Heart left ventricle (tissue), 16 donors: ENCODE measurements at regions of chr9 and their contacts with region 1.

Region 1: DNA sequence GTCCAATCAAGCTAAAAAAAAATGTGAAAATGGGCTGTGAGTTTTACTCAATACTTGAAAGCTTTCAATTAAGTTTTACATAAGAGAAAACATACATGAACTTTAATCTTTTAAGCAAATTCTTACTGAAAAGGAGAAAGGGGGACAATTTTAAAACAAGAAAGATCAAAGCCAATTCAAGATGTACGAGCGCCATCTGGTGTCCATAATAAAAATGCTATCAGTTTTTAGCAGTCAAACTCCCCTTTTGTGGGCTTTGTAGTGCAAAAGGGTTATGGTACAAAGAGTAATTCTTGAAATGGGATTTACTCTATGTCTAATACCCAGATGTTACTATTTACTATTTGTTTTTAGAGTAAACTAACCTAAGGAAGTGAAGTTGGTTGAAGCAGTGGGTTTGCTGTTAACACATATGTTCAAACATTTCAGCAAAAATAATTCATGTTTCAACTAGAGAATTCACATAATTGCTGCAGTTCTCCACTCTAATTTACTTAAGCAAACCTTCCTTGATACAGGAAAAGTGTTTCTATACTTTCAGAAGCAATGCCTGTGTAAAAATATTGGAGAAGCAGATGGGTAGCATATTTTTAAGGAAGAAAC is 228.2 kb upstream of the TYRP1 start:
- DNase-seq: no peak
- ATAC-seq: no peak
- H3K4me3 ChIP-seq: no peak overlapping the region
- H3K27ac ChIP-seq: no peak overlapping the region
- H3K4me1 ChIP-seq: no peaks in the 10 kb centered on the region
- H3K27me3 ChIP-seq: no peaks in the 10 kb centered on the region
- CTCF ChIP-seq: peak; percentile 27 to 63 (median 48)
- POLR2A ChIP-seq: no peak

Region 2: DNA sequence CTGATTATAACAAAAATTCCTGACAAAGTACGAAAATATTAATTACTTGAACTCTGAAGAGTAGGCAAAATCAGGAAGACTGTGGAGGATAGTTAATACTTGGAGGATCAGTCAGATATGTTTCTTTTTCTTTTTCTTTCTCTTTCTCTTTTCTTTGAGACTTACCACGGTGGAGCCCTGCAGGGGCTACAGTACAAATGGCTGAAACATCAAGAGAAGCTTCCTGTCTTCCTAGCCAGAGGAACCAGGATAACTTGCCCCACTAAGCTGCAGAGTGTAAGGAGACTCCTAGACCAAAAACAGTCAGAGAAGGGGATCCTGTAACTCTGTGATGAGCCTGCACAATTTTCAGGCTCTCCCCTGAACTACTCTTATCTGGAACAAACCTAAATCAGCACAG is 96.4 kb before region 1 on chr9:
- intact Hi-C with region 1: no loop called
- DNase-seq: no peak
- ATAC-seq: no peak
- H3K4me3 ChIP-seq: no peak overlapping the region
- H3K27ac ChIP-seq: no peak overlapping the region
- H3K4me1 ChIP-seq: no peaks in the 10 kb centered on the region
- H3K27me3 ChIP-seq: no peaks in the 10 kb centered on the region
- CTCF ChIP-seq: no peak
- POLR2A ChIP-seq: no peak

Region 3: DNA sequence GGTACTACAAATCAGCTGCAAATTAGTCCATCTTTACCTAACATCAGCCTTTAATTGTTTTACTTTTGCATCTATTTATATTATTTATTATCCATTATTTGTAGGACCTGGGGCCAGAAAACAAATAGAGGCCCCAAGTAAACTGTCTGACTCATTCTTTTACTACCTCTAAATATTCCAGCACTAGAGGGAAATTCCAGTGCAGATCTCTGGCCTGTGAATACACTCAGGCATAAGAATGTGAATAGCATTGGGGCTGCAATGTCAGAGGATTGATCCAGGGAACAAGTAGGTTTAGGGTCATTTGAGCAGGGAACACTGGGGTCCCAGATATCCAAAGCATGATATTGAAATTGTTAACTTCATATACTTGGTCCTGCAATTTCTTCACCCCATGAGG is 51.6 kb after region 1 on chr9:
- intact Hi-C with region 1: loop called in 1 of 10 experiments (anchors 10 kb)
- DNase-seq: no peak
- ATAC-seq: no peak
- H3K4me3 ChIP-seq: no peak overlapping the region
- H3K27ac ChIP-seq: no peak overlapping the region
- H3K4me1 ChIP-seq: no peaks in the 10 kb centered on the region
- H3K27me3 ChIP-seq: no peaks in the 10 kb centered on the region
- CTCF ChIP-seq: no peak
- POLR2A ChIP-seq: no peak